Uterus (tissue), 4 donors: ENCODE measurements at regions of chr1 and their contacts with region 1.

Region 1: GRCh38 chr1:29549001-29549400 is 312.7 kb downstream of the PTPRU start:
- DNase-seq: no peak
- H3K4me3 ChIP-seq: no peak overlapping the region
- H3K27ac ChIP-seq: no peak overlapping the region
- H3K4me1 ChIP-seq: no peaks in the 10 kb centered on the region
- H3K27me3 ChIP-seq: no peaks in the 10 kb centered on the region
- CTCF ChIP-seq: no peak
- POLR2A ChIP-seq: no peak

Region 2: DNA sequence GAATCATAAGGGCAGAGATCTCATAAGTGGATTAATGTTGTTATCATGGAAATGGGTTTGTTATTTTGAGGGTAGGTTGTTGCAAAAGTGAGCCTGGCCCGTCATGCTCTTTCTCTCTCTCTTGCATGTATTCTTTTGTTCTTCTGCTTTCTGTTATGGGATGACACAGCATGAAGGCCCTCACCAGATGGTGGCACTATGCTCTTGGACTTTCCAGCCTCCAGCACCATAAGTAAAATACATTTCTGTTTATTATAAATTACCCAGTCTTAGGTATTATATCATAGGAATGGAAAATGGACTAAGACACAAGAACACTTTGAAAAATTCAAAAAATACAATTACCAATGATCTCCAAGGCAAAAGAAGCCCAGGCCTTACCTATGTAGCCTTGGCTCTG is 363.4 kb after region 1 on chr1:
- intact Hi-C with region 1: loop called (anchors 5 kb)
- DNase-seq: no peak
- H3K4me3 ChIP-seq: no peak overlapping the region
- H3K27ac ChIP-seq: no peak overlapping the region
- H3K4me1 ChIP-seq: no peaks in the 10 kb centered on the region
- H3K27me3 ChIP-seq: no peaks in the 10 kb centered on the region
- CTCF ChIP-seq: no peak
- POLR2A ChIP-seq: no peak